Right ventricle myocardium inferior (tissue), 1 donor: ENCODE measurements at regions of chr3 and their contacts with region 1.

Region 1: DNA sequence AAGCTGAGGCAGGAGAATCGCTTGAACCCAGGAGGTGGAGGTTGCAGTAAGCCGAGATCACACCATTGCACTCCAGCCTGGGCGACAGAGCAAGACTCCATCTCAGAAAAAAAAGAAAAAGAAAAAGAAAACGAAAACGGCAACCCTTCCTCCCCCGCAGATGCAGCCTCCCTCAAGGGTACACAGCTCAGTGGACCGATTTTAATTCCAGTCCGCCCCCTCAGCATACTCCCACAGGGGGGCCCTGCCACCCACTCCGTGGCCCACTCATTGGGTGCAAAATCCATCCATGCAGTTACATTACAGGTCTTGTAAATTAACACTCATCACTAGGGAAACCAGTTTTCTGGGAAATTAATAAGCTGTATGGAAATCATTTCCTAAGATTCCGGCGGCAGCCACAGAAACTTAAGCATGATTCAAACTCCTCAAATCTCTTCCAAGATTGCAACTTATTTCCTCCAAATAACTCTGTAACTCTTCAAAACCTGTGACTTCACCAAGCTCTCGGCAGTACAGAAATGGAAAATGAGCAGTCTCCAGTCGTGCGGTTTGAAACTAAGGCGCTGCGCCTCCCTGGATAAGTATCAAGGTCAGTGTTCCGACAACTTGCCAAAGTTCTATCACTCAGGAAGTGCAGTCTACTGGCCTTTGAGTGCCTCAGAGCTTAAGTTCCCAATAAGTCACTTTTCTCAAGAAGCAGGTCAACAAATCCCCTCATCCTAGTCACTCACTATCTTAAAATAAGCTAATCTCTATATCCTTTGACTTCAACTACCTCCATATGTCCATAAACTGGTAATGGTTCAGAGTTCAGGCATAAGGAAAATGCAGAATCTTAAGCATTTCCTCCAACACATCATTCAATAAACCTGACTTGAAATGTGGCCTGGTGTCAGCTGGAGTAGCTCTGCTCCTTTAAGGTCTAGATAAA is 24.7 kb upstream of the KLHL6 start:
- DNase-seq: no peak
- ATAC-seq: peak; percentile 61

Region 2: DNA sequence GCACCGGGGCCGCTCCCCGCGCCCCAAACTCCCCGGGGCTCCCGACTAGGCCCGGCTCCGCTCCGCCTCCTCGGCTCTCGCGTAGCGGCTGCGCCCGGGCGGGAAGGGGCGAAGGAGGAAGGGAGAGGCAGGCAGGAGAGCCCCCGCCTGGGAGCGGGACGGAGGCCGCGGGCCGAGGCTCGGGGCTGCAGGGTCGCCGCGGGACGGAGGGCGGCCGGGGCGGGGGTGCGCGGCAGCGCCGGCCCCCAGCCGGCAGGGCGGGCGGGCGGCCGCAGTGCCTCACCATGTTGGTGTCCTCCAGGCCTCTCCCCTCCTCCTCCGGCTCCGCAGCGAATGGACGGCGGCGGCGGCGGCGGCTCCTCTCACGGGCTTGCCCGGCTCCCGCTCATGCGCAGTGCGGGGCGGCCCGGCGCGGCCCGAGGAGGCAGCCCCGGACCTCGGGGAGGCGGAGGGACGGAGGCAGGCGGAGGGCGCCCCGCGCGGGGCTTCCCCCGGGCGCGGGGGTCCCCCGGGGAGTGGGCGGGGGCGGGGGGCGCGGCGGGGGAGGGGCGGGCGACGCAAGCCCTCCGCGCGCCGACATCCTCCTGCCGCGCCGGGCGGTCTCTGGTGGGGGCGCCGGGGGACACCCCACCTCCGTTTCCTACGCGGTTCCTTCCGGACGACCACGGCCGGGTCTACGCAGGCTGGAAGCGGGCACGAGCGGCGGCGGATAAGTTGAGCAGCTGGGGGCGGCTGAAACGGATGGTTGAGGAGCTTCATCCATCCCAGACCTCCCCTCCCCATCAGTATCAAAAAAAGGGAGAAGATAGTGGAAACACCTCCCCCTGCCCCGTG is 599.8 kb before region 1 on chr3 and contains the start of gene DCUN1D1:
- intact Hi-C with region 1: no loop called
- DNase-seq: peak; percentile 96
- ATAC-seq: peak; percentile 97
- total RNA-seq, gene DCUN1D1: 36.9 TPM

Region 3: GRCh38 chr3:183537295-183537730 is 42.9 kb before region 1 on chr3:
- intact Hi-C with region 1: no loop called
- DNase-seq: no peak
- ATAC-seq: peak; percentile 21

Region 4: DNA sequence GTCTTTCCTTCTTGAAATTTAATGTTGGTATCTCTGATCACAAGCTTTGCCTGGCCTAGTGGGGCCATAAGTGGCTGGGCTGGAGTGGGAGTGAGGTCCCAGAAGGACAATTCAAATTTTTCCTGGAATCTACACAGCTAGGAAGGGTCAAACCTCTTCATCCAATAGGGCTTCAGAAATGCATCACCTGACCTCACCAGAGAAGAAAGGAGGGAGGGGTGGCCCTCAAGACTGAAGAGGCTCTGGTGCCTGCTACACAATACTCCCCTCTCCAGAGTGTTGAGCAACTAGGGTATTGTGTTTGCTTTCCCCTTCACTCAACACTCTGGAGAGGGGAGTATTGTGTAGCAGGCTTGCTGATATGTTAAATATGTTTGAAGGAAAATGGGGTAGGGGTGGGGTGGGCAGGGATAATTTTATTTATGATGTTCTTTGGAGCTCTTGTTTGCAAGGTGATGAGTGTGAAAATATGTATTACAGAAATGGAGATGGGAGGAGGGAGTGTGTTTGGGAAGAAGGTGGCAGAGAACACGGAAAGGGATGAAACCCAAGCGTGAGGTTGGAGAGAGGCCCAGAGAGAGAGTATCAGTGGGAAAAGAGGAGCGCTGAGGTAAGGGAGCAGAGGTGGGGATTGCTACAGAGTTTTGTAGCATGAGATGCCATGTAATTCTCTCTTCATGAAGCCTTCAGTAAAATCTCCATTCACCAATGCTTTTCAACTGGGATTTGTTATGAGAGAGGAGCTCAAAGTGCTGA is 49.5 kb after region 1 on chr3:
- intact Hi-C with region 1: loop called (anchors 2 kb)
- DNase-seq: no peak
- ATAC-seq: peak; percentile 64